ENCODE measurements at regions of chr20 and their contacts with region 1.

Region 1: DNA sequence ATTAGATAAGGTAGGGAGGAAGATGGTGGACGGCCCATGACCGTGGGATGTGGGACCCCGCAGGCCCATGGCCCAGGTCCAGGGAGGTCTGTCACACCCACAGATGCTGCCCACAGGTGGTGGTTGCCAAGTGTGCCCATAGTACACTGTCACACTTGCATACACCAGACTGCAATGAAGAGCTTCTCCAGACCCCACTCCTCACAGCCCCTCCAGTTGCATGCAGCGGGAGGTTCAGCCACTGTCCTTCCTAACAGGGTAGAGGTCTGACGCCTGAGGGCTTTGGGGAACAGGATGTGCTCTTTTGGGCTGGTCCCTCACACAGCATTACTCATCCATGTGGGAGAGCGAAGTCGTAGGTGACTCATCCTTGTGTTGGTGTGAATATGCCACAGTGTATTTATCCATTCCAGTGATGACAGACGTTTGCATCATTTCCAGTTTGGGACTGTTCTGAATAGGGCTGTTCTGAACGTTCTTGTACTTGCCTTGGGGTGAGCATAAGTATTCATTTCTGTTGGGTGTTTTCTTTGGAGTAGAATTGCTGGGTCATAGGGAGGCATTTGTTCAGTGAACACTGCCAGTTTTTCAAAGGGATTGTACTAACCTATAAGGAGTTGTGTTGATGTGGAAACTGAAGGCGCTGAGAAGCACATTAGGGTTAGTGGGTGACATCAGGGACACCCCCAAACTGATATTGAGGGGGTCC is 10.1 kb upstream of the PYGB start:
- DNase-seq: peak; percentile 18
- H3K4me3 Mint-ChIP-seq: peak overlapping the region; percentile 32
- H3K27ac Mint-ChIP-seq: peak overlapping the region; percentile 87
- H3K4me1 Mint-ChIP-seq: peaks cover 17% of the 10 kb centered on the region
- H3K27me3 Mint-ChIP-seq: peaks cover 7% of the 10 kb centered on the region

Region 2: DNA sequence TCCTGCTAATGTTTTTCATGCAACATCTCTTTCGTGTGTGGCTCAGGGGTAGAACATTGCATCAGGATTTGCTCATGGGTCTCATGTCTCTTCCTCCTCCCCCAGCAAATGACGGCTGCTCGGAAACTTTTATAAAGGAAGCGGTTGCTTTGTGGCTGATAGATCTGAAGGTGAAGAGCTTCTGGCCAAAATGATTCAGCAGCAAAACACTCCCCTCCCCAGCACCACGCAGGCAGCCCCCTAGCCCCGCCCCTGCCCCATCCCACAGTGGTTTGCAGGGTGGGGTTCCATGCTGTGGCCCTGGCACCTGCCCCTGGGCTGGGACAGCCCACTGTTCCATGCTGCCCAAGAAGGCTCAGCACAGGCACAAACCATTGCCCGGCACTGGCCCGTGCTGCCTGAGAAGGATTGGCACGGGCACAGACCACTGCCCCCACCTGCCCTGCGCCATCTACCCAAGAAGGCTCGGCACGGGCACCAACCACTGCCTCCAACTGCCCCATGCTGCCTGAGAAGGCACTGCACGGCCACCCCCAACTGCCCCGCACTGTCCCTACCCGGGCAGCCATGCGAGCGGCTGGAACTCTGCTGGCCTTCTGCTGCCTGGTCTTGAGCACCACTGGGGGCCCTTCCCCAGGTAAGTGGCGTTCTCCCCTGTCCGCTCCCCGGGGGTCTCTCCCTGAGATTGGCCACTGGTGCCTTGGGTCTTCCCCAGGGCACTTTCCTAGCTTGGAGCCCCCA is 288.7 kb before region 1 on chr20 and contains the start of gene CST7:
- intact Hi-C with region 1: loop called (anchors 5 kb)
- DNase-seq: peak; percentile 83
- H3K4me3 Mint-ChIP-seq: peak within 1 kb of the TSS; percentile 94
- H3K27ac Mint-ChIP-seq: peak within 1 kb of the TSS; percentile 96
- H3K4me1 Mint-ChIP-seq: peaks cover 57% of the 10 kb centered on the region
- H3K27me3 Mint-ChIP-seq: no peaks in the 10 kb centered on the region
- total RNA-seq, gene CST7: 115 and 121 TPM in 2 replicates

Region 3: GRCh38 chr20:25195014-25195961 is 42.5 kb before region 1 on chr20 and contains the start of gene ENTPD6:
- intact Hi-C with region 1: loop called (anchors 5 kb)
- DNase-seq: peak; percentile 88
- H3K4me3 Mint-ChIP-seq: peak within 1 kb of the TSS; percentile 94
- H3K27ac Mint-ChIP-seq: peak within 1 kb of the TSS; percentile 75
- H3K4me1 Mint-ChIP-seq: peaks cover 22% of the 10 kb centered on the region
- H3K27me3 Mint-ChIP-seq: peaks cover 6% of the 10 kb centered on the region
- total RNA-seq, gene ENTPD6: 48.8 and 49.1 TPM in 2 replicates

Region 4: GRCh38 chr20:25223179-25223661 is 14.5 kb before region 1 on chr20:
- intact Hi-C with region 1: loop called (anchors 1 kb)
- DNase-seq: peak; percentile 18
- H3K4me3 Mint-ChIP-seq: no peak overlapping the region
- H3K27ac Mint-ChIP-seq: peak overlapping the region; percentile 30
- H3K4me1 Mint-ChIP-seq: peaks cover 7% of the 10 kb centered on the region
- H3K27me3 Mint-ChIP-seq: no peaks in the 10 kb centered on the region

Measured in activated T-helper 2 cell treated with anti-CD3 and anti-CD28 coated beads, Interferon-gamma antibody, Interleukin-2, Interleukin-4, amounts not matched to agents 10 μg/mL and 5 μg/mL and 100 μg/mL, durations not matched to agents 14 hours and 24 hours and 36 hours (primary cell).